Panc1 (cell line): ENCODE measurements at regions of chr16 and their contacts with region 1.

Region 1: GRCh38 chr16:67672739-67673662 is 6.4 kb downstream of the C16orf86 start:
- DNase-seq: peak; percentile 48
- ATAC-seq: peak; percentile 51
- H3K4me3 ChIP-seq: no peak overlapping the region
- H3K27ac ChIP-seq: no peak overlapping the region
- H3K4me1 ChIP-seq: peaks cover 3% of the 10 kb centered on the region; the same call in 1 of the 2 replicates
- H3K27me3 ChIP-seq: no peaks in the 10 kb centered on the region
- CTCF ChIP-seq: peak; percentile 81

Region 2: DNA sequence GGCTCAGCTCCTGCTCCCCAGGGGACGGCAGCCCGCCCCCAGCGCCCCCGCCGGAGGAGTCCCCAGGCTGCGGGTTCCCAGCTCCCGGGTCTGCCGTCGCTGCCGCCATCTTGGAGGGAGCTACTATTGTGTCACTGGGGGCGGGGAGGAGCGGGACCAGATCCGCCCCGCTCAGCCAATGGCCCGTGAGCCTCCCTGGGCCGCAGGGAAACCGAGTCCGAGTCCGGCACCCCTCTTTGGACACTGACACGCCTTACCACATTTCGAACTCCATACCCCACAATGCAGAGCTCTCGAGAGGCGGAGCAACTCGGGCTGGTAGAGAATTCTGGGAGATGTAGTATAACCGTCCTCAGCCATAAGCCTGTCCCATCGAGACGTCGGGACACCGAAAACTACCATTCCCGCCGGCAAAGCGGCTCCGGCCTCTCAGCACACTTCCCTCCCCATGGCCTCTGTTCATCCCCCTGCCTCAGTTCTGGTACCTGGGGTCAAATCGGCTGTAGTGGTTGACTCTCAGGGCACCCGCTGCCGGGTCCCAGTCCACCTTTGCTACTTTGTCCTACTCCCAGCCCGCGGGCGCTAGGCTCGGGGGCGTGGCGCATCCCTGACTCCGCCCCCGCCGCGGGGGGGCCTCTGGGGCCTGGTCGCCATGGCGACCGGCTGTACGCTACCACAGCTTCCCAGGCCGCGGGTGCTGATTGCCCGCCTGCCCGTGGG is 133.6 kb after region 1 on chr16 and contains the starts of genes RANBP10 and TSNAXIP1:
- CTCF ChIA-PET with region 1: interaction called, 6 read pairs
- POLR2A ChIA-PET with region 1: no interaction called
- in situ Hi-C with region 1: no loop called
- intact Hi-C with region 1: loop called (anchors 10 kb)
- DNase-seq: peak; percentile 95
- ATAC-seq: peak; percentile 98
- H3K4me3 ChIP-seq: peak within 1 kb of the TSS; percentile 92 to 96
- H3K27ac ChIP-seq: peak within 1 kb of the TSS; percentile 85
- H3K4me1 ChIP-seq: peaks cover 9% of the 10 kb centered on the region
- H3K27me3 ChIP-seq: no peaks in the 10 kb centered on the region
- CTCF ChIP-seq: no peak
- total RNA-seq, gene RANBP10: 13.4 TPM
- total RNA-seq, gene TSNAXIP1: 1.6 TPM

Region 3: GRCh38 chr16:67928561-67929364 is 255.8 kb after region 1 on chr16:
- CTCF ChIA-PET with region 1: no interaction called
- POLR2A ChIA-PET with region 1: no interaction called
- in situ Hi-C with region 1: no loop called
- intact Hi-C with region 1: loop called (anchors 5 kb)
- DNase-seq: peak; percentile 41
- ATAC-seq: peak; percentile 84
- H3K4me3 ChIP-seq: no peak overlapping the region
- H3K27ac ChIP-seq: no peak overlapping the region
- H3K4me1 ChIP-seq: no peaks in the 10 kb centered on the region
- H3K27me3 ChIP-seq: no peaks in the 10 kb centered on the region
- CTCF ChIP-seq: peak; percentile 91